Activated naive CD4-positive, alpha-beta T cell treated with anti-CD3 and anti-CD28 coated beads, Interleukin-2, amount 10 ng/mL, durations not matched to agents 7 days and 5 days (primary cell): ENCODE measurements at regions of chr12 and their contacts with region 1.

Region 1: DNA sequence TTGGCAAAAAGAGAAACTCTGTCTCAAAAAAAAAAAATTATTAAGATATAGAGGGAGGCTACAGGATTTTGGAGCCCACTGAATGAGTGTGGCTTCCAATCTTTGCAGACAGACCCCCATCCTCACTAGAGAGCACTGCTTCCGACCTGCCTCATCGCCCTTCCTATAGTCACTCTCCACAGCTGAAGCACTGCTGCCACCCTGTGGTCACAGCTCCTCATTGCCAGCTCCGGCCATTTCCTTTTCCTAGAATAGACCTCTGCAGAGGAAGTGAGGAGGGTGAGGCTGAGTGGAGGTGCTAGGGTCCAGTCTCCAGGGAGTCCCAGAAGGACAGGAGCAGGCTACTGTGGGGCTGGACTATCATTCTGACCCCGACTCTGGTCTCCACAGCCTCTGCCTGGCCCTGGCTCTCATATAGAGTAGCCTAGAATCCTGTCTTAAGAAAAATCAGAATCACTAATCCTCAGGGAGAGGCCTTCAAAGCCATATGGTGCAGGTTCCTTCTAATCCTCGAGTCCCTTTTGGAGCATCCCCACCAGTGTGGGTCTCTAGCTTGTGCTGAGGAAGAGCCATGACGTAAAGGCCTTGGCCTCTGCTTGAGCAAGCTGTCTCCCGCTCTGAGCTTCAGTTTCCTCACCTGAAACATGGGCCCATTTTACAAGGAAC is 1.4 kb upstream of the NPFF start:
- DNase-seq: peak; percentile 90
- H3K4me3 Mint-ChIP-seq: no peak overlapping the region
- H3K27ac Mint-ChIP-seq: peak overlapping the region; percentile 34
- H3K4me1 Mint-ChIP-seq: peaks cover 12% of the 10 kb centered on the region
- H3K27me3 Mint-ChIP-seq: no peaks in the 10 kb centered on the region

Region 2: GRCh38 chr12:53327435-53328042 is 181.1 kb before region 1 on chr12:
- CTCF ChIA-PET with region 1: interaction called, 19 read pairs
- DNase-seq: no peak
- H3K4me3 Mint-ChIP-seq: no peak overlapping the region
- H3K27ac Mint-ChIP-seq: no peak overlapping the region
- H3K4me1 Mint-ChIP-seq: peaks cover 25% of the 10 kb centered on the region
- H3K27me3 Mint-ChIP-seq: peaks cover 64% of the 10 kb centered on the region

Region 3: DNA sequence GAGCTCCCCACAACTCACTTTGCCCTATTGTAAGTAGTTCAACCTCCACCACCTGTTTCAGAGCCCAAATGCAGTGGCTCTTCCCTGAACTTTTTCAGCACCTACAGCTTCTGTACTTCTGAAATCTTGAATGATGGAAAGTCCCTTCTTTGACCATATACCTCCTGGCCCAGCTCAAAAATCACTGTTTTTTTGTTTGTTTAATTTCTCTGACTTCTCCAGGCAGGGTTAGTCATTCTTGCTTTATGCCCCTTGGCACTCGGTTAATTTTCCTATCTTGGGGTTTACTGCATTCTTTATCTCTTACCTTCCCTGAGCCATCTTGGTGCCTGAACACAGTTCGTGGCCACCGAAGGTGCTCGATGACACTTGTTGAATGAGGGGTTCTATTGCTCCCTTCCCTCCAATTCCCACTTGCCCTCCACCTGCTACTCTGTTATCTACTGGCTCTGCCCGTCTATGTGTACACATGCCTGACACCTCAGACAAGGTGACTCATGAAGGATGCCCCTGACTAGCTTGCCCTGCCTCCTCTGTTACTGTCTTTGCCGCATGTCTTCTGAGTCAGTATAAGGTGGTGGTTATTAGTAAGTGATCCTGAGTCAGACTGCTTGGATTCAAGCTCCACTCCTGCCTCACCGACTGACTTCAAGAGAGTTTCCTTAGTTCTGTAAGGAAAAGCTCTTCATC is 80.6 kb before region 1 on chr12:
- CTCF ChIA-PET with region 1: interaction called, 11 read pairs
- DNase-seq: no peak
- H3K4me3 Mint-ChIP-seq: no peak overlapping the region
- H3K27ac Mint-ChIP-seq: no peak overlapping the region
- H3K4me1 Mint-ChIP-seq: no peaks in the 10 kb centered on the region
- H3K27me3 Mint-ChIP-seq: peaks cover 23% of the 10 kb centered on the region

Region 4: DNA sequence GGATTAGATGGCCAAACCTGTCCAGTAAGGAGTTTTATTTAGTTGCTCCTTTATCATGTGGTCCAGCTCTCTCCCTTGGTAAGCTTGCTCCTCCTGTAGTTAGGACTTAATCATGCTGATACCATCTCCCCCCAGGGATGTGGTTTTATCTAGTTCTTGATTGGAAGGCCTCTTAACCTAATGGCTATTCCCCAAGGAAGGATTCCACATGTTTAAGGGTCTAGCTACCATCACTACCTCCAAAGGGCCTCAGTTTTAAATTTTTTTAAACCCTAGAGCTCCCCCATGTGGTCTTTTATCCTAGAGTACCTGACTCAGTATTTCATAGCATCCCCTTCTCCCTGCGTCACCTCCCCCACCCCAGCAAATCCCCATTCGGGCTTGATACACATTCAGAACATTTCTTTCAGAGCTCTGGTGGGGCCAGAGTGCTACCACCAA is 31.9 kb before region 1 on chr12:
- CTCF ChIA-PET with region 1: interaction called, 45 read pairs
- DNase-seq: no peak
- H3K4me3 Mint-ChIP-seq: no peak overlapping the region
- H3K27ac Mint-ChIP-seq: peak overlapping the region; percentile 55
- H3K4me1 Mint-ChIP-seq: peaks cover 28% of the 10 kb centered on the region
- H3K27me3 Mint-ChIP-seq: no peaks in the 10 kb centered on the region

Region 5: DNA sequence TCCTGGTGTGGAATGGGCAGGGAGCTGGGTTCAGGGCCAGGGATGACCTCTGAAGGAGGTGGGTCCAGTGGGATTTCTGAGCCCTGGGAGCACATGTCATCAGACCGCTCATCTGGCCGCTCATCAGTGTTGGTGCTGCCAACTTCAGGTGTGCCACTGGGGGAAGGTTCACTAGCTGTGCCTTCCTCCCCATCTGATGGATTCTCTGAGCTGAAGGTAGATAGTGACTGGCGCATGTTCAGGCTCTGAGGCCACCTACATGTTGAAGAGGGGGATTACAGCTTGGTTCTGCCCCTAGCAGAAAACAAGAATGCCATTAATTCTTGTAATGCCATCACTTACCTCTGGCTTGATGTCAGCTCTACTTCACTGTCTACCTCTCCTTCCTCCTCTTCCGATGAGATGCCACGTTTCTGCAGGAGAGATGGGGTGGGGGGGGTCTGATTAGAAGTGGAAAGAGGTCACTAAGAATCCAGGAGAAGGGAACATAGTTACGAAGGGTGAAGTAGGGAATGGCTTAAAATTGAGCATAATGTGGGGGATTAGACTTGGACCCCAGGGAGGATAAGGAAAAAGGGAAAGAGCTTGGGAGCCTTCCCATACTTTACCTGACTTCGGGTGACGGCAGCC is 26.6 kb before region 1 on chr12:
- CTCF ChIA-PET with region 1: interaction called, 45 read pairs
- DNase-seq: no peak
- H3K4me3 Mint-ChIP-seq: no peak overlapping the region
- H3K27ac Mint-ChIP-seq: no peak overlapping the region
- H3K4me1 Mint-ChIP-seq: peaks cover 3% of the 10 kb centered on the region
- H3K27me3 Mint-ChIP-seq: no peaks in the 10 kb centered on the region

Region 6: GRCh38 chr12:53492188-53492587 is 16.5 kb before region 1 on chr12:
- CTCF ChIA-PET with region 1: interaction called, 10 read pairs
- DNase-seq: no peak
- H3K4me3 Mint-ChIP-seq: peak overlapping the region; percentile 66
- H3K27ac Mint-ChIP-seq: peak overlapping the region; percentile 69
- H3K4me1 Mint-ChIP-seq: peaks cover 33% of the 10 kb centered on the region
- H3K27me3 Mint-ChIP-seq: no peaks in the 10 kb centered on the region

Region 7: DNA sequence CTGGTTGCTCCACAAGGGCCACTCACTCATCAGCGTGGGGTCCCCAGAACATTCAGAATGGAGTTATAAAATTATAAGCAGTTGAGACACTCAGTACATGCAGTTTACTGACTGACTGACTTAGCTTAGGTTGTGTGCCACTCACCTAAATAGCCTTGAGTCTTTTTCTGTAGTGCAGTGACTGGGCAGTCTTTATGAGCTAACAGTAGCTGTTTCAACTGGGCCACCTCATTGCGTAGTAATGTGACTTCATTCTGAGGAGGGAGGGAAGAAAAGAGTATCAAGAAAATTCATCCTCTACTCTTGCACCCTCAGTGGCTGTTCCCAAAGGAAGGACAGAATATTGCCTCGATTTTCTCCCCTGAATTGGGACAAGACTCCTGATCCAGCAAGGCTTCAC is 14.5 kb after region 1 on chr12:
- CTCF ChIA-PET with region 1: interaction called, 32 read pairs
- DNase-seq: no peak
- H3K4me3 Mint-ChIP-seq: no peak overlapping the region
- H3K27ac Mint-ChIP-seq: no peak overlapping the region
- H3K4me1 Mint-ChIP-seq: no peaks in the 10 kb centered on the region
- H3K27me3 Mint-ChIP-seq: no peaks in the 10 kb centered on the region

Region 8: GRCh38 chr12:53575502-53576253 is 67.0 kb after region 1 on chr12:
- CTCF ChIA-PET with region 1: no interaction called
- DNase-seq: no peak
- H3K4me3 Mint-ChIP-seq: no peak overlapping the region
- H3K27ac Mint-ChIP-seq: no peak overlapping the region
- H3K4me1 Mint-ChIP-seq: peaks cover 35% of the 10 kb centered on the region
- H3K27me3 Mint-ChIP-seq: no peaks in the 10 kb centered on the region